Right cardiac atrium (tissue), 5 donors: ENCODE measurements at regions of chr12 and their contacts with region 1.

Region 1: GRCh38 chr12:68807576-68808387 is at the start of gene MDM2:
- DNase-seq: peak; percentile 95 to 98 (median 98)
- ATAC-seq: peak; percentile 98
- H3K4me3 ChIP-seq: peak within 1 kb of the TSS; percentile 74
- H3K27ac ChIP-seq: peak within 1 kb of the TSS; percentile 83
- H3K4me1 ChIP-seq: no peaks in the 10 kb centered on the region
- H3K27me3 ChIP-seq: no peaks in the 10 kb centered on the region
- total RNA-seq, gene MDM2: 44.6 to 60.8 (median 48.8) TPM

Region 2: DNA sequence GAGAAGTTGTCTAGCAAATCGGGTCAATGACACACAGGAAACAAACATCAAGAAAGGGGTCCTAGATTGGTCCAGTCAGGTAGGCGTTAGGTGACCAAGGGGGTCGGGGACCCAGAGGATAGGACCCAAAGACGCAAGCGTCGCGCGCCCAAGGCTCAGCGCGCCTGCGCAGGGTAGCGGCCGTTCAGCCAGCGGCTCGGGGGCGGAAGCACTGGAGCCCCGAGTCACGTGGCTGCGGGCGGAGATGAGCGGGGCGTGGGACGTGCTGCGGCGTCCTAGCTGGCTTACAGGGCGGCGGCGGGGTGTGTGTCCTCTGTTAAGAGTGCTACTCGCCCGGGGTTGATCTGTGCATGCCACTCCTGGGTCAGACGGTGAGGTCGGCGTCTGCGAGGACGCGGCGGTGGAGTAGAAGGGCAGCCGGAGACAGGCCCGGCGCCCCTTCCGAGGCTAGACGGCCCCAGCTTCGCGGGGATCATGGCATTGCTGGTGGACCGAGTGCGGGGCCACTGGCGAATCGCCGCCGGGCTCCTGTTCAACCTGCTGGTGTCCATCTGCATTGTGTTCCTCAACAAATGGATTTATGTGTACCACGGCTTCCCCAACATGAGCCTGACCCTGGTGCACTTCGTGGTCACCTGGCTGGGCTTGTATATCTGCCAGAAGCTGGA is 61.7 kb before region 1 on chr12 and contains the start of gene SLC35E3:
- intact Hi-C with region 1: loop called in 1 of 4 experiments (anchors 1 kb)
- DNase-seq: peak; percentile 94 to 98 (median 98)
- ATAC-seq: peak; percentile 99 to 100
- H3K4me3 ChIP-seq: peak within 1 kb of the TSS; percentile 56
- H3K27ac ChIP-seq: peak within 1 kb of the TSS; percentile 67
- H3K4me1 ChIP-seq: peaks cover 4% of the 10 kb centered on the region
- H3K27me3 ChIP-seq: no peaks in the 10 kb centered on the region
- total RNA-seq, gene SLC35E3: 5.2 to 9.6 (median 6.7) TPM